ENCODE measurements at regions of chr17 and their contacts with region 1.

Region 1: DNA sequence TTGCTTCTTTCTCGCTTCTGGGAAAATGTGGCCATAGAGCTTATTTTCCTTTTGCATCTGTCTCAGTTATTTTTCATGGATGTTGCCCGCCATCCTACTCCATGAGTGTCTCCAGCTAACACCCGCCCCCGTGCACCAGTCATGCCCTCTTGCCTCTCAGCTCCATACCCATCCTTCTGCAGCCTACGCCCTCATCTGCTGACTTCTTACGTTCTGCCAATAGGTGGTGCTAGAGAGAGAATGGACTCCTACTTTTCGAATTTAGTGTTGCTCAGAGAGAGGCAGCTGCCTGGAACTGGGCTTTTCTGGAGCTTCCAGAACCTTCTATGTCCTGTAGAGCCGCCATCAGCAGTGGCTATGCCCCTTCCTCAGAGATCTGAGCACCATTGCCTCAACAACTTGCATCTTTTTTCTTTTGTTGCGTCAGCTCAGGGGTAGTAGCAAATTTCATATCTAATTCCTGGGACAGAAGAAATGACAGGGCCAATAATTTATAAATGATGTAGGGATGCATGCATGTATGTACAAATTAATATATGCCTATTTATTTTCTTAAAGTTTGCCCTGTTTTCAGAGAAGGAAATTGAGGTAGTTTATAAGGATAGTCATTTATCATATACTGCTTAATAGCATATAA is 119.7 kb upstream of the MYOCD start:
- DNase-seq: peak; percentile 19
- H3K4me3 ChIP-seq: no peak overlapping the region
- H3K27ac ChIP-seq: no peak overlapping the region
- H3K4me1 ChIP-seq: no peaks in the 10 kb centered on the region
- H3K27me3 ChIP-seq: no peaks in the 10 kb centered on the region
- CTCF ChIP-seq: peak; percentile 63 to 72 (median 69)
- EP300 ChIP-seq: no peak
- POLR2A ChIP-seq: no peak

Region 2: DNA sequence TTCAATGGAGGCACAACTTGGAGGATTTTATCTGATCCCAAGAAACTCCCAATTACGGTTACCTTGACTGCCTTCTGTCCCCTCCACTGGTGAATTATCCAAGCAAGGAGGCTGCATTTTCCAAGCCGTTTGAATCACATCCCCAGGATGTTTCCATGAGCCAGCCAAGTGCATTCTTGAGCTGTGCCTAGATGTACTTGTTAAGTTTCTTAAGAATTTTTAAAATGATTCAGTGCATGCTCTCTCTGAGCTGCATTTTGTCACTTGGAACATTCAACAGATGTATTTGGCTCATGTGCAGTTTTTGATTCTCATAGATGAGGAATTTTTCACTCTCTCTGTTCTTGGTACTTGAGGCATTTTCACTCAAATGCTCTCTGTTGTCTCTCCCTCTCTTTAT is 82.9 kb before region 1 on chr17:
- in situ Hi-C with region 1: loop called in 1 of 4 experiments (anchors 25 kb)
- intact Hi-C with region 1: no loop called
- DNase-seq: no peak
- H3K4me3 ChIP-seq: no peak overlapping the region
- H3K27ac ChIP-seq: peak overlapping the region; percentile 24 to 66 (median 38)
- H3K4me1 ChIP-seq: peaks cover 0 to 5% (median 2%) of the 10 kb centered on the region in 4 donors
- H3K27me3 ChIP-seq: no peaks in the 10 kb centered on the region
- CTCF ChIP-seq: no peak
- EP300 ChIP-seq: no peak
- POLR2A ChIP-seq: no peak

Region 3: GRCh38 chr17:12567077-12568053 is 21.4 kb after region 1 on chr17:
- in situ Hi-C with region 1: no loop called
- intact Hi-C with region 1: loop called (anchors 1 kb)
- DNase-seq: no peak
- H3K4me3 ChIP-seq: no peak overlapping the region
- H3K27ac ChIP-seq: no peak overlapping the region
- H3K4me1 ChIP-seq: no peaks in the 10 kb centered on the region
- H3K27me3 ChIP-seq: no peaks in the 10 kb centered on the region
- CTCF ChIP-seq: no peak
- EP300 ChIP-seq: no peak
- POLR2A ChIP-seq: no peak

Region 4: DNA sequence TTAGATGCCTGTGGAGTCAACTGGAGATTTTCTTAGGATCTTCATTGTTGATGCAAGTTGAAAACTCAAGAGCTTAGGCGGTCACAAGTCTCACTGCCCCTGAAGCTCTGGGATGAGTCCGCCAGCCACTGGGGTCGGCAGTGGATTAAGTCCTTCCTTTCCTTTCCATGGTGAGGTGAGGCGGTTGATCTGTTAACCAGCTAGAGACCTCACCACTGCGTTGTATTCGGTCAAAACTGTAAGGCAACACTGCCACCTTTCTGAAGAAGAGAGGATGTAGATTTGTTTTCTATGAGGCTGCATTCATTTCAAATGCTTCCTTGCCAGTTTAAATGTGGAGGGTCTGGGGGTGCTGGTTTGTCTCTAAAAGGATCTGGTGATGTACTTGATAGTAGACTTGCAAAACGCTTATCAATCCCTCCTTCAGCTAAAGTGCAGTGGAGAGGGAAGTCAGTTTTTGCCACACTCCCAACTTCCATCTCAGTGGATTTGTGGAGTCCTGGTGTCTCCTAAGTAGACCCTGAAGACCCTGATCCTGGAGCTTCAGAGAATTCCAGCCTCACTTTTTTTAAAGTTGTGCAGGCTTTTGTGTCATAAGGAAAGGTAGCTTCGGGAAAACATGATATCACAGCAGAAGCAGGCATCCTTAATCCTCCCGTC is 121.4 kb after region 1 on chr17:
- in situ Hi-C with region 1: no loop called
- intact Hi-C with region 1: loop called (anchors 5 kb)
- DNase-seq: peak; percentile 20
- H3K4me3 ChIP-seq: peak overlapping the region; percentile 24 to 69 (median 50)
- H3K27ac ChIP-seq: peak overlapping the region; percentile 80 to 95 (median 88)
- H3K4me1 ChIP-seq: peaks cover 0 to 12% (median 5%) of the 10 kb centered on the region in 4 donors
- H3K27me3 ChIP-seq: peaks cover 38% of the 10 kb centered on the region
- CTCF ChIP-seq: peak; percentile 33 to 62 (median 39)
- EP300 ChIP-seq: no peak
- POLR2A ChIP-seq: no peak

Region 5: GRCh38 chr17:12730931-12731521 is 185.0 kb after region 1 on chr17:
- in situ Hi-C with region 1: loop called in 1 of 4 experiments (anchors 10 kb)
- intact Hi-C with region 1: no loop called
- DNase-seq: peak; percentile 81
- H3K4me3 ChIP-seq: no peak overlapping the region
- H3K27ac ChIP-seq: peak overlapping the region; percentile 70 to 80 (median 76)
- H3K4me1 ChIP-seq: peaks cover 9 to 42% (median 30%) of the 10 kb centered on the region in 4 donors
- H3K27me3 ChIP-seq: no peaks in the 10 kb centered on the region
- CTCF ChIP-seq: no peak
- EP300 ChIP-seq: no peak
- POLR2A ChIP-seq: no peak

Region 6: DNA sequence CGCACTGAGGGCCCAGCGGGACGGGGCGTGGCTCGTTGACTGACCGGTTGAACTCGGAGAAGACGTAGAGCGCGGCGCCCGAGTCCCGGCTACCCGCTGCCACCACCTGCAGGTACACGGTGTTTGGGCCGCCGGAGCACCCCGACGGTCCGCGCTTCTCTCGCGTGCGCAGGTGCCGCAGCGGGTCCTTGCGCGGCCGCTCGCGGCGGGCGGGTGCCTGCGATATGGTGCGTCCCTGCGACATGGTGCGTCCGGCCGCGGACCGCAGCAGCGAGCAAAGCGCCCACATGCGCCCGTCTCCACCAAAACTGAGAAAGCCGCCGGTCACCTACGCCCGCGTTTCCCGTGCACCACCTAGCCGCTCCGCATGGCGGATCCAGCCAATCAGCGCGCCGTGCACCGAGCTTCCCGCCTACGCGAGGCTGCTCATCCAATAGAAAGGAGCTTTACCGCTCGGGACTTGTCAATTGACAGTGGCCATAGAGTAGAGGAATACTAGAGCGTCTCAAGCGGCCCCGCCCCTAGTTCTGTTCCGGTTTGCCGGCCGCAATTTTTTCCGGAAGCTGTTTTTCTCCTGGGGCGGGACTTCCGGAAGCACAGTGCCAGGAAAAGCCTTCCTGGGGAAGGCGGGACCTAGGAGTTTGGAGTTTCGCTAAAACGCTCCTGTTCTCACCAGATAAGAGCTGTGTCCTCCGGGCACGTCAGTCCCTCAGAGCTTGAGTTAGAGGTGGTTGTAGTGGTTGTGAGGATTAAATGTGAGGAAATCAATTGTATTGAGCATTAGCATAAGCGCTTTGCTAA is 471.9 kb after region 1 on chr17 and contains the start of gene ELAC2:
- in situ Hi-C with region 1: loop called in 2 of 4 experiments (anchors 25 kb)
- intact Hi-C with region 1: no loop called
- DNase-seq: peak; percentile 97
- H3K4me3 ChIP-seq: peak within 1 kb of the TSS; percentile 74 to 89 (median 86)
- H3K27ac ChIP-seq: peak within 1 kb of the TSS; percentile 85 to 97 (median 91)
- H3K4me1 ChIP-seq: peaks cover 4 to 16% (median 13%) of the 10 kb centered on the region in 4 donors
- H3K27me3 ChIP-seq: no peaks in the 10 kb centered on the region
- CTCF ChIP-seq: peak in 3 of 5 experiments; percentile 11 to 37 (median 12)
- EP300 ChIP-seq: no peak
- POLR2A ChIP-seq: peak; percentile 74
- total RNA-seq, gene ELAC2: 56.2 to 143 (median 66.0) TPM